ENCODE measurements at regions of chr2 and their contacts with region 1.

Region 1: GRCh38 chr2:84925724-84926376 is 20.4 kb downstream of the TMSB10 start:
- DNase-seq: peak; percentile 100
- H3K4me3 Mint-ChIP-seq: peak overlapping the region; percentile 82
- H3K27ac Mint-ChIP-seq: peak overlapping the region; percentile 93
- H3K4me1 Mint-ChIP-seq: peaks cover 41% of the 10 kb centered on the region
- H3K27me3 Mint-ChIP-seq: no peaks in the 10 kb centered on the region

Region 2: GRCh38 chr2:84472856-84473575 is 452.8 kb before region 1 on chr2:
- CTCF ChIA-PET with region 1: no interaction called
- POLR2A ChIA-PET with region 1: no interaction called
- intact Hi-C with region 1: no loop called
- DNase-seq: no peak
- H3K4me3 Mint-ChIP-seq: no peak overlapping the region
- H3K27ac Mint-ChIP-seq: no peak overlapping the region
- H3K4me1 Mint-ChIP-seq: no peaks in the 10 kb centered on the region
- H3K27me3 Mint-ChIP-seq: no peaks in the 10 kb centered on the region

Region 3: DNA sequence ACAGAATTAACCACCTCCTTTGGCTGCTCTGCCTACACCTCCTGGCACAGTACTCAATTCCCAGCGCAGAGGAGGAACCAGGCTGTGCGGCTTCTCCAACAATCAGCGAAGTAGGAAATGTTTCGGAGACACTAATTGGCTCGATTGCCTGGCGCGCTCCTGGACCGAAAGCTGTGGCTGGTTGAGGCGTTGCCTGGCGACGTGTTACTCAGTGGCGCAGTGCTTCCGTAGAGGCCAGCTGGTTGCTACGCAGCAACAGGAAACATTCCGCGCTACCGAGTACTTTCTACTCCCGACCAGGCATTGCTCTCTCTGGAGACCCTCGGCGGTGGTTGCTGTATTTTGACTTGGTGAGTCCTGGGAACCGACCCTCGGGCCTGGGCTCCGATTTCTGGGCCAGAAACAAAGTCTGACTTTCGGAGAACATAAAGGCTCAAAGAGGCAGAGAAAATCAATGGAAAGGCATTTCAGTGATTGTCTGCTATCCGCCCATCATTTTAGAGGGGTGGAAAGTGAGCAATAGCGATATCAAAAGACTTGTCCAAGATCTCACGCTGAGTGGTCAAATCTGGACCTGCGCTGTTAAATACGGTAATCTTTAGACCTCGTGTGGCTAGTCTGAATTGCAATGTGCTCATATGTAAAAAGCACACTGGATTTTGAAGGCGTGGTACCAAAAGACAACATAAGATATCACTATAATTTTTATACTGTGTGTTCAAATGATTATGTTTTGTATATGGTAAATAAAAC is 409.4 kb before region 1 on chr2 and contains the start of gene DNAH6:
- CTCF ChIA-PET with region 1: interaction called, 6 read pairs
- POLR2A ChIA-PET with region 1: no interaction called
- intact Hi-C with region 1: loop called (anchors 5 kb)
- DNase-seq: peak; percentile 92
- H3K4me3 Mint-ChIP-seq: peak within 1 kb of the TSS; percentile 84
- H3K27ac Mint-ChIP-seq: no peak within 1 kb of the TSS
- H3K4me1 Mint-ChIP-seq: peaks cover 23% of the 10 kb centered on the region
- H3K27me3 Mint-ChIP-seq: no peaks in the 10 kb centered on the region
- total RNA-seq, gene DNAH6: 0.33 to 0.85 TPM

Region 4: GRCh38 chr2:84781942-84782716 is 143.7 kb before region 1 on chr2:
- CTCF ChIA-PET with region 1: interaction called, 7 read pairs
- POLR2A ChIA-PET with region 1: no interaction called
- intact Hi-C with region 1: loop called (anchors 2 kb)
- DNase-seq: peak; percentile 75
- H3K4me3 Mint-ChIP-seq: no peak overlapping the region
- H3K27ac Mint-ChIP-seq: peak overlapping the region; percentile 80
- H3K4me1 Mint-ChIP-seq: peaks cover 72% of the 10 kb centered on the region
- H3K27me3 Mint-ChIP-seq: no peaks in the 10 kb centered on the region

Region 5: DNA sequence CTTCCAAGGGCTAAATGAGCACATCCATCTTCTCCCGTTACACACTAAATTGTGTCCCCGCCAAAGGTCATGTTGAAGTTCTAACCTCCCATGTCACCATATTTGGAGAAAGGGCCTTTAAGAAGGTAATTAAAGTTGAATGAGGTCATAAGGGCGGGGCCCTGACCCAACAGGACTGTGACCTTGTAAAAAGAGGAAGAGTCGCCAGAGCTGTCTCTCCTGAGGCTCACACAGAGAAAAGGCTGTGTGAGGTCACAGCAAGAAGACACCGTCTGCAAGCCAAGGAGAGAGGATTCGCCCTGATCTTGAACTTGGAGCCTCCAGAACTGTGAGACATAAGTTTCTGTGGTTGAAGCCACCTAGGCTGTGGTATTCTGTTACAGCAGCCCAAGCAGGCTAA is 69.1 kb before region 1 on chr2:
- CTCF ChIA-PET with region 1: interaction called, 33 read pairs
- POLR2A ChIA-PET with region 1: interaction called, 3 read pairs
- intact Hi-C with region 1: no loop called
- DNase-seq: peak; percentile 66
- H3K4me3 Mint-ChIP-seq: no peak overlapping the region
- H3K27ac Mint-ChIP-seq: peak overlapping the region; percentile 46
- H3K4me1 Mint-ChIP-seq: peaks cover 91% of the 10 kb centered on the region
- H3K27me3 Mint-ChIP-seq: no peaks in the 10 kb centered on the region

Region 6: GRCh38 chr2:84905181-84906107 is 20.4 kb before region 1 on chr2 and contains the start of gene TMSB10:
- CTCF ChIA-PET with region 1: interaction called, 117 read pairs
- POLR2A ChIA-PET with region 1: interaction called, 41 read pairs
- intact Hi-C with region 1: loop called (anchors 1 kb)
- DNase-seq: peak; percentile 90
- H3K4me3 Mint-ChIP-seq: peak within 1 kb of the TSS; percentile 91
- H3K27ac Mint-ChIP-seq: peak within 1 kb of the TSS; percentile 93
- H3K4me1 Mint-ChIP-seq: peaks cover 66% of the 10 kb centered on the region
- H3K27me3 Mint-ChIP-seq: no peaks in the 10 kb centered on the region
- total RNA-seq, gene TMSB10: 2,535 to 2,567 TPM

Region 7: GRCh38 chr2:84970868-84971509 is 45.1 kb after region 1 on chr2 and contains the start of gene KCMF1:
- CTCF ChIA-PET with region 1: interaction called, 53 read pairs
- POLR2A ChIA-PET with region 1: interaction called, 25 read pairs
- intact Hi-C with region 1: loop called (anchors 1 kb)
- DNase-seq: peak; percentile 78
- H3K4me3 Mint-ChIP-seq: peak within 1 kb of the TSS; percentile 100
- H3K27ac Mint-ChIP-seq: peak within 1 kb of the TSS; percentile 100
- H3K4me1 Mint-ChIP-seq: peaks cover 43% of the 10 kb centered on the region
- H3K27me3 Mint-ChIP-seq: no peaks in the 10 kb centered on the region
- total RNA-seq, gene KCMF1: 90.5 to 94.1 TPM

Region 8: DNA sequence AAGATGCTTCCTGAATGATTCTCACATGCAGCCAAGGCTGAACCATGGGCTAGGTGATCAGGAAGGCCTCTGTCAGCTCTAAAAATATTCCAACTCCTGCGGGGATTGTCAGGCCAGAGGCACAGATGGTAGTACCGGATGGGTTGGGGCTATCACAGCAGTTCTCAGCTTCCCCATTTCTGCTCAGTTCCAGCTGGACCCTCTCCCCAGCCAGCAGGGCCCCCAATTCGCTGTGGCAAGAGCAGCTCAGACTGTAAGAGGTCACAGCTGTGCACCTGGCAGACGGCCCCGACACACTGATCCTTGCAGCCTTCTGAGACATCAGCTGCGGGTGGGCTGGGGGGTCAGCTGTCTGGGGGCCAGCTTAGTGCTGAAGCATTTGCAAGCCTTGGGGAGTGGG is 163.7 kb after region 1 on chr2:
- CTCF ChIA-PET with region 1: no interaction called
- POLR2A ChIA-PET with region 1: no interaction called
- intact Hi-C with region 1: no loop called
- DNase-seq: no peak
- H3K4me3 Mint-ChIP-seq: no peak overlapping the region
- H3K27ac Mint-ChIP-seq: no peak overlapping the region
- H3K4me1 Mint-ChIP-seq: peaks cover 4% of the 10 kb centered on the region
- H3K27me3 Mint-ChIP-seq: peaks cover 2% of the 10 kb centered on the region

Region 9: GRCh38 chr2:85181134-85181631 is 255.3 kb after region 1 on chr2:
- CTCF ChIA-PET with region 1: no interaction called
- POLR2A ChIA-PET with region 1: no interaction called
- intact Hi-C with region 1: no loop called
- DNase-seq: no peak
- H3K4me3 Mint-ChIP-seq: no peak overlapping the region
- H3K27ac Mint-ChIP-seq: no peak overlapping the region
- H3K4me1 Mint-ChIP-seq: no peaks in the 10 kb centered on the region
- H3K27me3 Mint-ChIP-seq: peaks cover 2% of the 10 kb centered on the region

Region 10: GRCh38 chr2:85243101-85244072 is 317.5 kb after region 1 on chr2:
- CTCF ChIA-PET with region 1: no interaction called
- POLR2A ChIA-PET with region 1: no interaction called
- intact Hi-C with region 1: no loop called
- DNase-seq: peak; percentile 38
- H3K4me3 Mint-ChIP-seq: no peak overlapping the region
- H3K27ac Mint-ChIP-seq: no peak overlapping the region
- H3K4me1 Mint-ChIP-seq: no peaks in the 10 kb centered on the region
- H3K27me3 Mint-ChIP-seq: peaks cover 9% of the 10 kb centered on the region

Region 11: DNA sequence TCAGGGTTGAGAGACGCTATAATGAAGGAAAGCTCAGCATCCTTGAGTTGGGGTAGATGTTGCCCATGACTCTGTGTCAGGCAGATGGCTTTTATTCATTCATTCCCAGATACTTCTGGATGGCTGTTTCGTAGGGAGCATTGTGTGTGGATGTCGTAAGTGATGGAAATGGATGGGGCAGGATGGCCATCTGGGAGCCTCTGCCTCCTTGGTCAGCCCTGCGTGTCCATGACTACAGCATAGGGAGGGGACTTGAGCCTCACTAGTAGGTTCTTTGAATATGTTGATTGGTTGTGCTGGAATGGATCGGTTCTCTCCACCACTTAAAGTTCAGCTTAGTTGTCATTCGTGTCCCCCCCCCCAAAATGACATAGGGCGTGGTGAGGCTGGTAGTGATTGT is 357.1 kb after region 1 on chr2:
- CTCF ChIA-PET with region 1: interaction called, 24 read pairs
- POLR2A ChIA-PET with region 1: no interaction called
- intact Hi-C with region 1: no loop called
- DNase-seq: no peak
- H3K4me3 Mint-ChIP-seq: no peak overlapping the region
- H3K27ac Mint-ChIP-seq: no peak overlapping the region
- H3K4me1 Mint-ChIP-seq: peaks cover 6% of the 10 kb centered on the region
- H3K27me3 Mint-ChIP-seq: no peaks in the 10 kb centered on the region